MCF 10A (cell line): ENCODE measurements at regions of chr9 and their contacts with region 1.

Region 1: GRCh38 chr9:84261082-84261746 is 79.3 kb downstream of the SLC28A3 start:
- DNase-seq: peak; percentile 82
- H3K4me3 Mint-ChIP-seq: no peak overlapping the region
- H3K27ac Mint-ChIP-seq: no peak overlapping the region
- H3K4me1 Mint-ChIP-seq: peaks cover 11% of the 10 kb centered on the region
- H3K27me3 Mint-ChIP-seq: no peaks in the 10 kb centered on the region
- CTCF ChIP-seq: peak; percentile 79

Region 2: GRCh38 chr9:83920927-83921707 is 340.1 kb before region 1 on chr9 and contains the start of gene KIF27:
- CTCF ChIA-PET with region 1: interaction called, 5 read pairs
- POLR2A ChIA-PET with region 1: interaction called, 11 read pairs
- intact Hi-C with region 1: loop called (anchors 1 kb)
- DNase-seq: peak; percentile 96
- H3K4me3 Mint-ChIP-seq: peak within 1 kb of the TSS; percentile 77
- H3K27ac Mint-ChIP-seq: peak within 1 kb of the TSS; percentile 92
- H3K4me1 Mint-ChIP-seq: peaks cover 10% of the 10 kb centered on the region
- H3K27me3 Mint-ChIP-seq: no peaks in the 10 kb centered on the region
- CTCF ChIP-seq: peak; percentile 11
- total RNA-seq, gene KIF27: 9.4 and 10.0 TPM in 2 replicates

Region 3: GRCh38 chr9:83992421-83992820 is 268.8 kb before region 1 on chr9:
- CTCF ChIA-PET with region 1: interaction called, 12 read pairs
- POLR2A ChIA-PET with region 1: interaction called, 3 read pairs
- intact Hi-C with region 1: loop called (anchors 1 kb)
- DNase-seq: no peak
- H3K4me3 Mint-ChIP-seq: no peak overlapping the region
- H3K27ac Mint-ChIP-seq: no peak overlapping the region
- H3K4me1 Mint-ChIP-seq: peaks cover 11% of the 10 kb centered on the region
- H3K27me3 Mint-ChIP-seq: no peaks in the 10 kb centered on the region
- CTCF ChIP-seq: peak; percentile 20

Region 4: DNA sequence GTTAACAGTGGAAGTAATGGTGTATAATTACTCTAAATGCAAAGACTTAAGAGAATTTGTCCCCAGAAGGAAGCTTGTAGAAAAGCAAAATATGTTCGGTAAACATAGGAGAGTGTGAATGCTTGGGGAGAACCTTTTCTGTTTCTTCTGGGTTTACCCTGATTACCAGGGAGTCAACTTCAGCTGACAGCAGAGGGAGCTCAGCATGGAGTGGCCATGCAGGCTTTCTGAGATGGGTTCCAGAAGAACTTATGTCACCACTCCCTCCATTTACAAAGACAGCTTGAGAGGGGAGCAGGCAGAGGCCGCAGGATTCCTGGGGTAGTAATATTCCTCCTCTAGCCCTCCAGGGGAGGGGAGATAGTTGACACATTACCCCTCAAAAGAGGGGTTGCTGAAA is 16.4 kb before region 1 on chr9:
- CTCF ChIA-PET with region 1: interaction called, 13 read pairs
- POLR2A ChIA-PET with region 1: interaction called, 3 read pairs
- intact Hi-C with region 1: no loop called
- DNase-seq: no peak
- H3K4me3 Mint-ChIP-seq: no peak overlapping the region
- H3K27ac Mint-ChIP-seq: no peak overlapping the region
- H3K4me1 Mint-ChIP-seq: no peaks in the 10 kb centered on the region
- H3K27me3 Mint-ChIP-seq: no peaks in the 10 kb centered on the region
- CTCF ChIP-seq: no peak

Region 5: GRCh38 chr9:84285381-84285780 is 24.2 kb after region 1 on chr9:
- CTCF ChIA-PET with region 1: interaction called, 14 read pairs
- POLR2A ChIA-PET with region 1: no interaction called
- intact Hi-C with region 1: no loop called
- DNase-seq: no peak
- H3K4me3 Mint-ChIP-seq: no peak overlapping the region
- H3K27ac Mint-ChIP-seq: no peak overlapping the region
- H3K4me1 Mint-ChIP-seq: no peaks in the 10 kb centered on the region
- H3K27me3 Mint-ChIP-seq: no peaks in the 10 kb centered on the region
- CTCF ChIP-seq: no peak

Region 6: GRCh38 chr9:84315278-84315877 is 54.2 kb after region 1 on chr9:
- CTCF ChIA-PET with region 1: interaction called, 14 read pairs
- POLR2A ChIA-PET with region 1: interaction called, 3 read pairs
- intact Hi-C with region 1: loop called (anchors 1 kb)
- DNase-seq: peak; percentile 72
- H3K4me3 Mint-ChIP-seq: no peak overlapping the region
- H3K27ac Mint-ChIP-seq: no peak overlapping the region
- H3K4me1 Mint-ChIP-seq: peaks cover 23% of the 10 kb centered on the region
- H3K27me3 Mint-ChIP-seq: no peaks in the 10 kb centered on the region
- CTCF ChIP-seq: peak; percentile 79

Region 7: DNA sequence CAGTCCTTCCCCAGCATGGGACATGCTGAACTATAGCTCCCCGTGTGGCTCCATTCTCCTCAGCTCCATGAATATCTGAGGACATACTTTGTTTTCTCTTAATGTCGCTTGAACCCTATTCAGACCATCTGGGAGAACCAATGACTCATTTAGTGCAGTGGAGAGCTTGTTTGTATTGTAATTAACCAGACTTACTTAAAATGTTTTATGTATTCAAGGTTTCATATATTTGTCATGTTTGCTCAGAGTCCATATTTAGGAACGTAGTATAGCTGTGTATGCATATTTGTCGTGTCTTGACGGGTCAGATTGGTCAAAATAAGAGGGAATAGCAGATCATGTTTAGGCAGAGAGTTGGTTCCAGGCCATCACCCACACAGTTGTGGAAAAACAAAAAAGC is 258.2 kb after region 1 on chr9:
- CTCF ChIA-PET with region 1: no interaction called
- POLR2A ChIA-PET with region 1: no interaction called
- intact Hi-C with region 1: no loop called
- DNase-seq: no peak
- H3K4me3 Mint-ChIP-seq: no peak overlapping the region
- H3K27ac Mint-ChIP-seq: no peak overlapping the region
- H3K4me1 Mint-ChIP-seq: no peaks in the 10 kb centered on the region
- H3K27me3 Mint-ChIP-seq: no peaks in the 10 kb centered on the region
- CTCF ChIP-seq: no peak

Region 8: GRCh38 chr9:84681516-84682285 is 420.5 kb after region 1 on chr9:
- CTCF ChIA-PET with region 1: no interaction called
- POLR2A ChIA-PET with region 1: no interaction called
- intact Hi-C with region 1: no loop called
- DNase-seq: no peak
- H3K4me3 Mint-ChIP-seq: no peak overlapping the region
- H3K27ac Mint-ChIP-seq: no peak overlapping the region
- H3K4me1 Mint-ChIP-seq: no peaks in the 10 kb centered on the region
- H3K27me3 Mint-ChIP-seq: no peaks in the 10 kb centered on the region
- CTCF ChIP-seq: no peak